Caco-2 (cell line): ENCODE measurements at regions of chr1 and their contacts with region 1.

Region 1: DNA sequence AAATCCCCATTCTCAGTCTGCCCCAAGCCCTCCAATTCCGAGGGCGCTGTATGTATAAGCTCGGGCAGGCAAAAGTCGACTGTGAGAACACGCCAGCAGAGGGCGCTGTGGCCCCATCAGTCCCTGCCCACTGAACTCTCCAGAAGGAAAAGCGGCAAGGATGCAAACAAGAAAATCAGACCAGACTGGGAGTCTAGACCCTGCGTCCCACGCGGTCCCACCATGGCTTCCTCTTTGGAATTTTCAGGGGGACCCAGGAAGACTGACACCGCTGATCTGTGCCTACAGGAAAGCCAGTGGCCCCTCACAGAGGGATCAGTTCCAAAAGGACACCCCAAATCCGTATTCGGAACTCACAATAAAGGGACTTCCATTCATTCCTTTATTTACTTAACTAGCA is 19.5 kb downstream of the TEX35 start:
- DNase-seq: peak; percentile 85 to 87
- H3K4me3 ChIP-seq: no peak overlapping the region
- H3K4me3 Mint-ChIP-seq: no peak overlapping the region
- H3K27ac Mint-ChIP-seq: no peak overlapping the region
- H3K4me1 ChIP-seq: peaks cover 37% of the 10 kb centered on the region
- H3K4me1 Mint-ChIP-seq: peaks cover 27% of the 10 kb centered on the region
- H3K27me3 ChIP-seq: no peaks in the 10 kb centered on the region
- H3K27me3 Mint-ChIP-seq: no peaks in the 10 kb centered on the region
- CTCF ChIP-seq: peak; percentile 91 to 93

Region 2: GRCh38 chr1:178273707-178274410 is 258.5 kb before region 1 on chr1:
- CTCF ChIA-PET with region 1: no interaction called
- POLR2A ChIA-PET with region 1: no interaction called
- intact Hi-C with region 1: no loop called
- DNase-seq: no peak
- H3K4me3 ChIP-seq: no peak overlapping the region
- H3K4me3 Mint-ChIP-seq: no peak overlapping the region
- H3K27ac Mint-ChIP-seq: no peak overlapping the region
- H3K4me1 ChIP-seq: peaks cover 52% of the 10 kb centered on the region
- H3K4me1 Mint-ChIP-seq: peaks cover 44% of the 10 kb centered on the region
- H3K27me3 ChIP-seq: no peaks in the 10 kb centered on the region
- H3K27me3 Mint-ChIP-seq: no peaks in the 10 kb centered on the region
- CTCF ChIP-seq: no peak

Region 3: DNA sequence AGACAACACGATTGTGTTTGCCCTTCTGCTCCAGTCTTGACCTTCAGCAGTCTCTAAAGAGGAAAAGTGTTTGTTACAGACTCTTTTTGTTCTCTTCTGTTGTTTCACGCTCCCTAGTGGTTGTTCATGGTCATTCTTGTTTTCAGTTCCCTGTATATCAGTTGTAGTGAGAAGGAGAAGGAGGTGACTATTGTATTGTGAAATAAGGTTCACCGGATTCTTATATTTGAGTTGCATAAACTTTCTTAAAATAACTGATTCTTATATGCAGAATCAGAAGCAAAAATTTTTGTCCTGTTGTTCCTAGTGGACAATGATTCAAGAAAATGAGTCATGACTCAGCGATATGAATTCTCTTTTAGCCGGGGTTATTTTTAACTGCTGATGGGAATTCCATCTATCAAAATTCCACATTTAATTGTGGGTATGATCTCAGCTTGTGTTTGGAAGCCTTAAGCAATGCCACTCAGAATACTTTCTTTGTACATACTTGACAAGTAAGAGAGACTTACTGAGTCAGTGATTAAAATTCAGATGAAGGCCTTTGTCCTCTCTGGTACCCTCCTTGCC is 187.8 kb before region 1 on chr1:
- CTCF ChIA-PET with region 1: no interaction called
- POLR2A ChIA-PET with region 1: no interaction called
- intact Hi-C with region 1: no loop called
- DNase-seq: peak in 1 of 2 experiments; percentile 19
- H3K4me3 ChIP-seq: no peak overlapping the region
- H3K4me3 Mint-ChIP-seq: no peak overlapping the region
- H3K27ac Mint-ChIP-seq: peak overlapping the region; percentile 79
- H3K4me1 ChIP-seq: peaks cover 30% of the 10 kb centered on the region
- H3K4me1 Mint-ChIP-seq: peaks cover 35% of the 10 kb centered on the region
- H3K27me3 ChIP-seq: no peaks in the 10 kb centered on the region
- H3K27me3 Mint-ChIP-seq: no peaks in the 10 kb centered on the region
- CTCF ChIP-seq: peak; percentile 25 to 29

Region 4: DNA sequence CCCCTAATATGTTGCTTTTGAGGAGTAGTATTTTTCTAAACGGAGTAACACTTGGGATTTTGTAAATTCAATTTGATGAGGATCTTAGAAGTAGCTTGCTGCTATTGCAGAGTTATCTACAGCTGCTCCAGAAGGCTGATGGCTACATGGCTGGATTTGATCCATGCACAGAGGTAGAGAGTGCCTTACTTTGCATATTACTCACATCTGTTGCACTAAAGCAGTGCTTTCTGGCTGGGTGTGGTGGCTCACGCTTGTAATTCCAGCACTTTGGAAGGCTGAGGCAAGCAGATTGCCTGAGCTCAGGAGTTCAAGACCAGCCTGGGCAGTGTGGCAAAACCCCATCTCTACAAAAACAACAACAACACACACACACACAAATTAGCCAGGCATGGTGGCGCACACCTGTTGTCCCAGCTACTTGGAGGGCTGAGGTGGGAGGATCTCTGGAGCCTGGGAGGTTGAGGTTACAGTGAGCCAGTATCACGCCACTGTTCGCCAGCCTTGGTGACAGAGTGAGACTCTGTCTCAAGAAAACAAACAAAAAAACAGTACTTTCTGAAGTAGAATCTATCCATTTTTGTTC is 217.3 kb after region 1 on chr1:
- CTCF ChIA-PET with region 1: interaction called, 6 read pairs
- POLR2A ChIA-PET with region 1: no interaction called
- intact Hi-C with region 1: loop called (anchors 2 kb)
- DNase-seq: no peak
- H3K4me3 ChIP-seq: no peak overlapping the region
- H3K4me3 Mint-ChIP-seq: no peak overlapping the region
- H3K27ac Mint-ChIP-seq: no peak overlapping the region
- H3K4me1 ChIP-seq: no peaks in the 10 kb centered on the region
- H3K4me1 Mint-ChIP-seq: no peaks in the 10 kb centered on the region
- H3K27me3 ChIP-seq: no peaks in the 10 kb centered on the region
- H3K27me3 Mint-ChIP-seq: no peaks in the 10 kb centered on the region
- CTCF ChIP-seq: no peak

Region 5: DNA sequence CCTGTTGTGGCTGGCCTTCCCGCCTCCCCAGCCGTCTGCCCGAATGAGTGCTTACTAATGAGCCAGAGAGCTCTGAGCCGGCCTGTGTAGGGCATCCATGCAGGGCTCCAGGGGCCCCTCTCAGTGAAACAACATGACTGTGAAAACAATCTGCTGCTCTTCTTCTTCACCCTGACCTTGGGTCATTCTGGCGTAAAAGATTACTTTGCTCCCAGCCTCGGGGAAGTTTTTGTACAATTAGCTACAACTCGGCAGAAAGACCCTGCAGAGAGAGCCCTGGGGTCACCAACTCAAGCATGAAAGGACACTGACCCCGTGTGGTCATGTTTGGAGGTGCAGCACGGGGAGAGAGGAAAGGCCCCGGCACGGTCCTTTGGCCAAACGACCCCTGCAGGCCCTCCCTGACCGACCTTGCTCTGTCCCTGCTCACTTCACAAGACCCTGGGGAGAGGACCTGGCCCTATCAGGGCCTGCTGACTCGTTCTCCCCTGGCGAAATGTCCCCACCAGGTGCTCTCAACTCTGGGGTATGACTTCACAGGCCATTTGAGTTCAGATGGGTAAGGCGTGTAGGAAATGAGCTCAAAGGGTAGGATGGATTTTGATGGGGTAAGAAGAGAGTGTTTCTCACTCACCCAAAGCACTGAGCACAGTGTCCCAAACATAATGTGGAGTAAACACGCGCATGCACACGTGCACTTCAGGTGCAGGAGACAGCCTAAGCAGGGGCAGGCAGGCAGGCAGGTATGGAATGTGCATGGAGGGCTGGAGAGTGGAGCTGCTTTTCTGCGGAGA is 470.4 kb after region 1 on chr1:
- CTCF ChIA-PET with region 1: interaction called, 18 read pairs
- POLR2A ChIA-PET with region 1: no interaction called
- intact Hi-C with region 1: loop called (anchors 1 kb)
- DNase-seq: peak; percentile 83 to 86
- H3K4me3 ChIP-seq: no peak overlapping the region
- H3K4me3 Mint-ChIP-seq: peak overlapping the region; percentile 28
- H3K27ac Mint-ChIP-seq: peak overlapping the region; percentile 77
- H3K4me1 ChIP-seq: peaks cover 9% of the 10 kb centered on the region
- H3K4me1 Mint-ChIP-seq: peaks cover 7% of the 10 kb centered on the region
- H3K27me3 ChIP-seq: no peaks in the 10 kb centered on the region
- H3K27me3 Mint-ChIP-seq: no peaks in the 10 kb centered on the region
- CTCF ChIP-seq: peak; percentile 95 to 98

Region 6: GRCh38 chr1:179025125-179025974 is 493.0 kb after region 1 on chr1 and contains the start of gene FAM20B:
- CTCF ChIA-PET with region 1: no interaction called
- POLR2A ChIA-PET with region 1: no interaction called
- intact Hi-C with region 1: loop called (anchors 1 kb)
- DNase-seq: peak; percentile 96 to 97
- H3K4me3 ChIP-seq: peak within 1 kb of the TSS; percentile 62
- H3K4me3 Mint-ChIP-seq: peak within 1 kb of the TSS; percentile 99
- H3K27ac Mint-ChIP-seq: peak within 1 kb of the TSS; percentile 90
- H3K4me1 ChIP-seq: peaks cover 43% of the 10 kb centered on the region
- H3K4me1 Mint-ChIP-seq: peaks cover 39% of the 10 kb centered on the region
- H3K27me3 ChIP-seq: no peaks in the 10 kb centered on the region
- H3K27me3 Mint-ChIP-seq: no peaks in the 10 kb centered on the region
- CTCF ChIP-seq: no peak
- total RNA-seq, gene FAM20B: 24.5 and 26.1 TPM in 2 replicates